ENCODE measurements at regions of chr15 and their contacts with region 1.

Region 1: GRCh38 chr15:91476861-91477260 is 376.6 kb upstream of the SLCO3A1 start:
- DNase-seq: no peak
- ATAC-seq: peak; percentile 35; the same call in 1 of the 3 replicates
- H3K4me3 ChIP-seq: no peak overlapping the region
- H3K27ac ChIP-seq: no peak overlapping the region
- H3K4me1 ChIP-seq: no peaks in the 10 kb centered on the region
- H3K27me3 ChIP-seq: no peaks in the 10 kb centered on the region
- CTCF ChIP-seq: peak; percentile 20; the same call in 1 of the 2 replicates
- EP300 ChIP-seq: no peak
- POLR2A ChIP-seq: no peak
- RAD21 ChIP-seq: no peak

Region 2: GRCh38 chr15:90489514-90489913 is 987.3 kb before region 1 on chr15:
- CTCF ChIA-PET with region 1: no interaction called
- POLR2A ChIA-PET with region 1: no interaction called
- in situ Hi-C with region 1: no loop called
- intact Hi-C with region 1: no loop called
- DNase-seq: peak; percentile 17
- ATAC-seq: peak; percentile 64
- H3K4me3 ChIP-seq: no peak overlapping the region; a peak in 1 of 6 replicates
- H3K27ac ChIP-seq: peak overlapping the region; percentile 52
- H3K4me1 ChIP-seq: peaks cover 40% of the 10 kb centered on the region
- H3K27me3 ChIP-seq: no peaks in the 10 kb centered on the region
- CTCF ChIP-seq: no peak
- EP300 ChIP-seq: no peak
- POLR2A ChIP-seq: no peak
- RAD21 ChIP-seq: no peak

Region 3: DNA sequence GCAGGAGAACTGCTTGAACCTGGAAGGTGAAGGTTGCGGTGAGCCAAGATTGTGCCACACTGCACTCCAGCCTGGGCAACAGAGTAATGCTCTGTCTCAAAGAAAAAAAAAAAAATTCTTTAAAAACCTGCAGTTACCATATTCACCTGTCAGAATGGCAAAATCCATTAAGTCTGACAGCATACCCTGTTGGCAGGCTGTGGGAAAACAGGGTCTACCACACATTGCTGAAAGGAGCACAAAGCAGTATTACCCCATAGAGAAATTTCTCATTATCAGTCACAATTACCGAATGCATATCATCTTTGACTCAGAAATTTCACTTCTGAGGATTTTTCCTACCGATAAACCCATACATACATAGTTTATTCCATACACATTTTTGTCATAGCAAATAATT is 112.5 kb after region 1 on chr15:
- CTCF ChIA-PET with region 1: no interaction called
- POLR2A ChIA-PET with region 1: no interaction called
- in situ Hi-C with region 1: no loop called
- intact Hi-C with region 1: loop called (anchors 2 kb)
- DNase-seq: peak; percentile 10
- ATAC-seq: peak; percentile 72
- H3K4me3 ChIP-seq: no peak overlapping the region
- H3K27ac ChIP-seq: no peak overlapping the region
- H3K4me1 ChIP-seq: no peaks in the 10 kb centered on the region
- H3K27me3 ChIP-seq: no peaks in the 10 kb centered on the region; a peak in 1 of 5 replicates
- CTCF ChIP-seq: peak; percentile 23; the same call in 1 of the 2 replicates
- EP300 ChIP-seq: no peak
- POLR2A ChIP-seq: no peak
- RAD21 ChIP-seq: no peak

Measured in HepG2 (cell line).